Activated CD4-positive, alpha-beta T cell treated with anti-CD3 and anti-CD28 coated beads, Interleukin-2, amount 10 ng/mL, durations not matched to agents 24 days and 14 days (primary cell): ENCODE measurements at regions of chr14 and their contacts with region 1.

Region 1: DNA sequence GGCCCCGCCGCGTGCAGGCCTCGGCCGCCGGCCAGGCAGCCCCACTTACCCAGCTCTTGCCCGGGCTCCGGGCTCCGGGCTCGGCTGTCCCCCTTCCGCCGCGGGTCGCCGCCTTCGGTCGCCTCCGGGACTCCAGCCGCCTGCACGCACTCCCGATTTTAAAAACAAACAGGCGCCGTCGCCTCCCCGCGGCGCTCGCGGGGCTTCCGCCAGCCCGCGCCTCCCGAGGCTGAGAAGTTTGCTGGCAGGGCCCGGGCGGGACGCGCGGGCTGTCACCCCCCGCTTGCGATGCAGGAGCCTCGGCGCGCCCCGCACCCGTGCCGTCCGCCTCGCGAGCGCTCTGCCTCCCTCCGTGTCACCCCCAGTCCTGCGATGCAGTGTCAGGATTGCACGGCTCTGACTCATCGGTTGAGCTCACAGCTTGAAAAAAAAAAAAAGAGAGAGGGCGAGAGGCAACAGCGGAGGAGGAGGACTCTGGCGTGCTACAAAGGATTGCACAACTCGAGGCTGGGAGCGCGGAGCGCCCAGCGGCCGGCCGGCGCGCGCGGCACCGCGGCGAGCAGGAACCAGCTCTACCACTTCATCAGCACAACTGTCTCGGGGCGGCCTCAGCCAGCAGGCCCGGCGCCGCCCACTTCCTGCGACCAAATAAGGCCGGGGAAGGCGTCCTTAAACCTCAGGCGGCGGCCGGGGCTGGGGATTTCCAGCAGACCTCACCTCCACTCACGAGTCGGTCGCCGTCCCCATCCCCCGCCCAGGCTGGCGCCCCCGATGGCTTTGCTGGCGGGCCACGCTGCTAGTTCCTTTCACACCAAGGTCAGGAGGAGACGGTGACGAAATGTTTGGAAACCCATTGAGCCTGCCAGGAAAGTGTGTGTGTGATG is 45.8 kb upstream of the PNMA1 start:
- DNase-seq: peak; percentile 99
- H3K4me3 Mint-ChIP-seq: peak overlapping the region; percentile 91
- H3K27ac Mint-ChIP-seq: peak overlapping the region; percentile 96
- H3K4me1 Mint-ChIP-seq: peaks cover 70% of the 10 kb centered on the region
- H3K27me3 Mint-ChIP-seq: peaks cover 2% of the 10 kb centered on the region

Region 2: DNA sequence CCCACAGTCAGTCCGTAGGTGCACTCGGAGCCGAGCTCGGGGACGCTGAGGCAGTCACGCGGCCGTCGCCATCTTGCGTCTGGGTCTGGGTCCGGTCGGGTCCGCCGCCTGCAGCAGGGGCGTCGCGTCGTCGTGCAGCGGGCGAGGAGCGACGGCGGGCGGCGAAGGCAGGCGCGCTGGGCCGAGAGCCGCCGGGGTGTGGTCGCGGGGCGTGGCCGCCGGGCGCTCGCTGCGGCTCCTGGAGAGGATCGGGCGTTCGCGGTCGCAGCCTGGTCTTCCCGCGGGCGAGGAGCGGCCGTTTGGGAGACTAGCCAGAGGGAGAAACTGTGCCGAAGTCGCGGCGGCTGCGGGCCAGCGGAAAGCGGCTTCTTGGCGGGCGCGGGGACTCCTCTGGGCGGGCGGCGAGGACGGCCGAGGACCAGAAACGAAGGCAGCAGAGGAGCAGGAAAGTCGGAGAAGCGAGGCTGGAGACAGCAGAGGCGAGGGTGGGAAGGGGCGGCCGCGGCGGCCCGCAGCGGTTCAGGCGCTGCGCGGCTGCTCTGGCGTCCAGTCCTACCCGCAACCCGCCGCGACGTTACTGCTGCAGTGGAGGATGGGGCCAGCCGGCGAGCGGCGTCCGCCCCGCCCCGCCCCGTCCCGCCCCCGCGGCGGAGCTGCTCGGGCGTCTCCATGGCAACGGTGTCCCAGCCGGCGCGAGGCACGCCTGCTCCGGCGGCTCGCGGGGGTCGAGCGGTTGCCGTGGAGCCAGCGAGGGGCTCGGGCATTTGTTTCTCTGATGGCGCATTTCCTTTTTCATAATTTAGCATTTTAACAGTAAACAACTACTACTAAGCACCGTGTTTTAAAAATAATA is 45.9 kb before region 1 on chr14 and contains the start of gene PNMA1:
- intact Hi-C with region 1: loop called (anchors 1 kb)
- DNase-seq: peak; percentile 96
- H3K4me3 Mint-ChIP-seq: peak within 1 kb of the TSS; percentile 92
- H3K27ac Mint-ChIP-seq: peak within 1 kb of the TSS; percentile 93
- H3K4me1 Mint-ChIP-seq: peaks cover 27% of the 10 kb centered on the region
- H3K27me3 Mint-ChIP-seq: no peaks in the 10 kb centered on the region
- total RNA-seq, gene PNMA1: 29.7 and 30.4 TPM in 2 replicates

Region 3: GRCh38 chr14:73741386-73741875 is 18.5 kb before region 1 on chr14:
- intact Hi-C with region 1: loop called (anchors 2 kb)
- DNase-seq: peak; percentile 92
- H3K4me3 Mint-ChIP-seq: peak overlapping the region; percentile 91
- H3K27ac Mint-ChIP-seq: peak overlapping the region; percentile 85
- H3K4me1 Mint-ChIP-seq: peaks cover 67% of the 10 kb centered on the region
- H3K27me3 Mint-ChIP-seq: no peaks in the 10 kb centered on the region

Region 4: DNA sequence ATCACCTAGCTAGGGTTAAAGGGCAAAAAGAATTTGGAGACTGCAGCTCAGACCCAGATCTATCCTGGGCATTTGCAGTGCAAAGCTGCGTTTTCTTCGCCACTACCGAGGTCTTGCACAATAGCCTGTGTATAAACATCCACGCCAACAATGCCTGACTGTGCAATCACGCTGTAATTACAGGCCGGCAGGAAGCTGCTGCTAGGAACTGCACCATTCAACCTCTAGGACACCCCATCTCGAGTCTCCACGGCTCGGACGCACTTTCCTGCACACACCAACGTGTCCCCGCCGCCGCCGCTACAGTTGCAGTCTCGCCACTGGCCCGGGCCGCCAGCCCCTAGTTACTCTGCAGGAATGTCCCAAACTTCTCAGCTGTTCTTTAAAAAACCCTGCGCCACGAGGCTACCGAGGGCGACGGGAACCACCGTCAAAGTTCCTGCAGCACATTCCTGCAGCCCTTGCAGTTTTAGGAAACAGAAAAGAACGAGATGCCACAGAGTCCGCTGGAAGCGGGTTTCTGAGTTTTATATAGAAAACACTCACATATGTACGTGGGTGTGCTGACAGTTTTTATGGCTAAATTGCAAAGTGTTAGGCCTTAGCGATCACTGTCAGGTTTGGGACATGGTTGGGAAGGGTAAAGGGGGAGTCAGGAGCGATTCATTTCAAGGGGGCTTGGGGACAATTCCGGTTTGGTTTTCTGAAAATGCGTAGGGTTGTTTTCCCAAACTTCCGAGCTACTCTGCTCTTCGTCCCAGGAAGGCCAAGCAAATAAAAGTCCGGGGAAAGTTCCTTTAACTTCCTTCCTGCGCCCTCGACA is 26.1 kb after region 1 on chr14:
- intact Hi-C with region 1: loop called (anchors 1 kb)
- DNase-seq: peak; percentile 91
- H3K4me3 Mint-ChIP-seq: peak overlapping the region; percentile 94
- H3K27ac Mint-ChIP-seq: peak overlapping the region; percentile 95
- H3K4me1 Mint-ChIP-seq: peaks cover 60% of the 10 kb centered on the region
- H3K27me3 Mint-ChIP-seq: no peaks in the 10 kb centered on the region

Region 5: GRCh38 chr14:73842851-73843250 is 82.9 kb after region 1 on chr14:
- intact Hi-C with region 1: no loop called
- DNase-seq: no peak
- H3K4me3 Mint-ChIP-seq: no peak overlapping the region
- H3K27ac Mint-ChIP-seq: no peak overlapping the region
- H3K4me1 Mint-ChIP-seq: no peaks in the 10 kb centered on the region
- H3K27me3 Mint-ChIP-seq: peaks cover 6% of the 10 kb centered on the region